Mammary epithelial cell (primary cell): ENCODE measurements at regions of chr9 and their contacts with region 1.

Region 1: DNA sequence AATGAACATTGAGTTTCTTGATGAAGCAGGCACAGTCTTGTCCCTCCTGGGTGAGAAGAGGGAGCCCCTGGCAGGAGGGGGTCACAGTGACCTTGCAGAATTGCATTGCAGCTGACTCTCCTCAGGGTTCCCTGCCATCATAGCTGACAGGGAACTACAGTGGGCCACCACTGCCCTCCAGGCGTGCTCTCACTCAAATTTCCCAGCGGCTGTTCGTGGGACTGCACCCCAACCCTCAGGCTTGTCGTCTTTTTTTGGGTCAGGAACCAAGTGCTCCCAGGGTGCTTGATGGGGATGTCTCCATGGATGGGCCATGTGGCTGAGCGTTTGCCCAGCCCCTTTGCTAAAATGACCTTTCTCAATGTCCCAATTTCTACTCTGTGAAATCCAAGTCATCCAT is 215.8 kb downstream of the MELK start:
- DNase-seq: no peak
- H3K4me3 ChIP-seq: no peak overlapping the region
- H3K27ac ChIP-seq: no peak overlapping the region
- H3K4me1 ChIP-seq: no peaks in the 10 kb centered on the region
- H3K27me3 ChIP-seq: no peaks in the 10 kb centered on the region
- CTCF ChIP-seq: peak; percentile 25 to 26

Region 2: DNA sequence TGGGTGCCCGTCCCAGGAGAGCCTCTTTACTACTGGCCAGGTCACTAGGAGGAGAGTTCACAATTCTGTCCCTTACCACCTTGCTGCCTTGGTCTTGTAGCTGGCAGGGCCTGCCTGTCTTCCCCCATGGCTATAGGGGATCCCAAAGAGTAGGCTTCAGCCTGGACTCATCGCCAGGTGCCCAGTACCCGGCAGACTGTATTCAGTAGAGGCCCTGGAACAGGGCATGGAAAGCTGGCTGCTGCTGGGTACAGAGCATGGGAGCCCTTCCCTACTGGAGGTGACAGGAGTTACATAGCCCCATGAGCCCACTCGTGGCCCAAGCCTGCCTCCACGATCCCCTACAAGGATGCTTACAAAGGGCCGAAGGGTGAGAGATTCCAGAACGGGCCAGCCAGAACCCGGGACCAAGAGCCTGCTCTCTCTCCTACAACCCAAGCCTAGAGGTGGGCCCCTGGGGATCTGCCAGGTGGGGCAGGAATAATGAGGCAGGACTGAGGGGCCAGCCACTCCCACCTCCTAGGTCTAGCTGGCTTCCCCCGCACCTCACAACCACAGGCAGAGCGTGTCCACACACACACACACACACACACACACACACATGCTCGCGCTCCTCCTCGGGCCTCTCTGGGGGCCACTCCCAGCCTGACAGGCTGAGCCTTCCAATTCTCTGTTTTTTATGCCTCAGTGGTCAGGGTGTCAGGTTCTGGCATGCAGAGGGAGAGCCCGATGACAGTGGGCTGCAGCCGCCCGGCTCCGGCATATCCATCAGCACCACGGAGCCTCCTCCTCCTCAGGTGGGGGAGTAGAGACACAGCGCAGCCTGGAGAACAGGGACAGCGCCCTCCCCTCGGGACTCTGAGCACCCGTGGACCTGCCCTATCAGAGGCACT is 59.5 kb after region 1 on chr9:
- CTCF ChIA-PET with region 1: no interaction called
- dilution Hi-C with region 1: no loop called
- in situ Hi-C with region 1: loop called in 1 of 2 experiments (anchors 10 kb)
- intact Hi-C with region 1: no loop called
- DNase-seq: peak; percentile 21
- H3K4me3 ChIP-seq: no peak overlapping the region
- H3K27ac ChIP-seq: no peak overlapping the region
- H3K4me1 ChIP-seq: no peaks in the 10 kb centered on the region
- H3K27me3 ChIP-seq: peaks cover 7% of the 10 kb centered on the region
- CTCF ChIP-seq: no peak

Region 3: DNA sequence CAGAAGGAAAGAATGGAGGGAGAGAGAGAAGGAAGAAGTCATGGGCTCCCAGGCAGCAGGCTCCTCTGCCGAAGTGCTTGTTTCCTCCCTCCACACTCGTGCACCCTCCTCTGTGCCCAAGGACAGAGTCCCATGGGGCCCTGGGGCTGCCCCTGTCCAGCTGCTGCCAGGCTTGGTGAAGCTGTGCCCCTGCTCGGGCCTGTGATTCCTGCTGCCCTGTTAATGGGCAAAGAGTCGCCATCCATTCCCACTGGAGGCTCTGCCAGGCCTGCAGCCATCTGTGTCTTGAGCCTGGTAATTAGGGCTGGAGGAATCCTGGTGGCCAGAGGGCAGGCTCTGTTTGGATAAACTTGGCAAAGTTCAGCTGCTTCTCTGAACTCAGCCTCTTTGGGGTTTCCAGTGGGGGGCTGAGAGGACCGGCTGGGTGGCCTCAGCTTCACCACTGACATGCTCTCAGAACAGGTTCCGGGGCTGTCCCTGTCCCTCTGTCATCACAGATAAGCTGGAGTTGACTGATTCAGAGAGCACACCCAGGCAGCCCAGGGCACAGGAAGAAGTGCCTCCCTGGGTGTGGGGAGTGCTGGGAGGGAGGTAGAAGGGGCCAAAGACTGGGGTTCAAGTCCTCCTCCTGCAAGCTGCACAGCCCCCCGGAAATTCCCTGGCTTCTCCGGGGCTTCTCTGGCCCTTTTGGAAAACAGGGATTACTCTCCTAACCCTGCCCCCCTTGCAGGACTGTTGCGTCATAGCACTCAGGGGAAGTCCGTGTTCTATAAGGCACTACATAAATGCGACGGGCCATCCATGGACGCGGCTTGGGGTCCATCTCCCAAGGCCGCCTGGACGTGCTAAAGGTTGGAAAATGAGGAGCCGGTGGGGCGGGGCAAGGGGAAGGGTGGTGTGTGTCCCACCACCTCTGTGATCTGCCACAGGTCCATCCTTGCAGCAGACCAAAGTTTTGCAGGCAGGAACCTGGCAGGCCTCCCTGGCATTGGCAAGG is 90.8 kb after region 1 on chr9:
- CTCF ChIA-PET with region 1: no interaction called
- dilution Hi-C with region 1: no loop called
- in situ Hi-C with region 1: no loop called
- intact Hi-C with region 1: no loop called
- DNase-seq: no peak
- H3K4me3 ChIP-seq: no peak overlapping the region
- H3K27ac ChIP-seq: no peak overlapping the region
- H3K4me1 ChIP-seq: no peaks in the 10 kb centered on the region
- H3K27me3 ChIP-seq: no peaks in the 10 kb centered on the region
- CTCF ChIP-seq: no peak